GM12878 (cell line): ENCODE measurements at regions of chr5 and their contacts with region 1.

Region 1: GRCh38 chr5:172714491-172715421 is 56.2 kb downstream of the DUSP1 start:
- DNase-seq: no peak
- ATAC-seq: peak; percentile 89
- H3K4me3 ChIP-seq: no peak overlapping the region
- H3K27ac ChIP-seq: no peak overlapping the region
- H3K4me1 ChIP-seq: no peaks in the 10 kb centered on the region
- H3K27me3 ChIP-seq: no peaks in the 10 kb centered on the region; a peak in 1 of 4 replicates
- CTCF ChIP-seq: peak; percentile 66 to 95 (median 88)
- EP300 ChIP-seq: no peak
- POLR2A ChIP-seq: no peak
- RAD21 ChIP-seq: peak; percentile 40

Region 2: DNA sequence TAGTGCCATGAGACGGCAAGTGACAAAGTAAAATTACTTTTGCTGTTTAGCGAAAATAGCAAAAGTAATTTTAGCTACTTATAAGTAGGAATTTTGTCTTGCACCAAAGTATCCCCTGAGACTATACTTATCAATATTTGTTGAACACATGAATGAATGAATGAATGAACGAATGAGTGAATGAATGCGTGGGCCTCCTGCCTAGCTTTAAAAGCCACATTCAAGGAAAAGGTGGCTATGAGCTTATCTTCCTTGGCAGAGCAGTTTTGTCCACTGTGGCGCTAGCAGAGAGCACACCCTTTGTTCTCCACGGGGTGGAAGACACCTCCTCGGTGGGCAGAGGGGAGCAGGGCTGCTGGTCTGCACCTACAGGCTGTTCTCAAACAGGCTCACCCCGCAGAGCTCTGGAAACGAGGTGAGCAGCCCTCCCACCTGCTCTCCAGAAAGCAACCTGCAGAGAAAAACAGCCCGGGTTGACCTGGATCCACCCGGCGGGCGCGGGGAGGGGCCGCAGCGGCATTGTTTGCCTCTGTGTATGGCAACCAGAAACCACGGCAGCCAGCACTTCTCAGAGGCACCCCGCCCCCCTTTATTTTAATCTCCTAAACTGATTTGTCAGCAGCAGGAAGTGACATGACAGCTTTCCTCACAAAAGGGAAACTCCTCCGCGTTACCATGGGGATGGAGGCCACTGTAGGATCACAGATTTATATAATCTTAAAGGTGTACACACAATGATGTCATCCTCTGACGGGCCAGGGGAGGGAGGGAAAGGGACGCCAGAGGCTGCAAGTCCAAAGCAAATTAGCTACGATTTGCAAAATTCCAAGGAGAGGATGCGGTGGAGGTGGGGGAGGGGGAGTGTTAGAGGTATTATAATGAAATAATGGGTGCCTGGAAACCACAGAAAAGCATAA is 50.4 kb after region 1 on chr5:
- CTCF ChIA-PET with region 1: interaction called, 40 read pairs
- POLR2A ChIA-PET with region 1: no interaction called
- RAD21 ChIA-PET with region 1: interaction called, 13 read pairs
- SMC1A ChIA-PET with region 1: interaction called, 3 read pairs
- in situ Hi-C with region 1: no loop called
- intact Hi-C with region 1: loop called (anchors 2 kb)
- DNase-seq: peak; percentile 83
- ATAC-seq: peak; percentile 93
- H3K4me3 ChIP-seq: peak overlapping the region; percentile 69; the same call in 1 of the 2 replicates
- H3K27ac ChIP-seq: peak overlapping the region; percentile 65
- H3K4me1 ChIP-seq: peaks cover 19% of the 10 kb centered on the region
- H3K27me3 ChIP-seq: no peaks in the 10 kb centered on the region
- CTCF ChIP-seq: no peak
- EP300 ChIP-seq: peak in 1 of 2 experiments; percentile 82; a peak in 2 of 4 replicates
- POLR2A ChIP-seq: peak; percentile 37; the same call in 1 of the 2 replicates
- RAD21 ChIP-seq: no peak

Region 3: GRCh38 chr5:172777881-172778814 is 63.4 kb after region 1 on chr5:
- CTCF ChIA-PET with region 1: interaction called, 40 read pairs
- POLR2A ChIA-PET with region 1: interaction called, 4 read pairs
- RAD21 ChIA-PET with region 1: no interaction called
- SMC1A ChIA-PET with region 1: interaction called, 13 read pairs
- in situ Hi-C with region 1: no loop called
- intact Hi-C with region 1: no loop called
- DNase-seq: no peak
- ATAC-seq: peak; percentile 49
- H3K4me3 ChIP-seq: peak overlapping the region; percentile 34
- H3K27ac ChIP-seq: peak overlapping the region; percentile 93
- H3K4me1 ChIP-seq: peaks cover 21% of the 10 kb centered on the region
- H3K27me3 ChIP-seq: no peaks in the 10 kb centered on the region
- CTCF ChIP-seq: no peak
- EP300 ChIP-seq: no peak
- POLR2A ChIP-seq: no peak
- RAD21 ChIP-seq: no peak

Region 4: GRCh38 chr5:172904643-172905347 is 190.0 kb after region 1 on chr5:
- CTCF ChIA-PET with region 1: interaction called, 12 read pairs
- POLR2A ChIA-PET with region 1: no interaction called
- RAD21 ChIA-PET with region 1: interaction called, 3 read pairs
- SMC1A ChIA-PET with region 1: interaction called, 3 read pairs
- in situ Hi-C with region 1: no loop called
- intact Hi-C with region 1: no loop called
- DNase-seq: no peak
- ATAC-seq: no peak
- H3K4me3 ChIP-seq: no peak overlapping the region
- H3K27ac ChIP-seq: no peak overlapping the region
- H3K4me1 ChIP-seq: peaks cover 18% of the 10 kb centered on the region
- H3K27me3 ChIP-seq: no peaks in the 10 kb centered on the region
- CTCF ChIP-seq: no peak
- EP300 ChIP-seq: no peak
- POLR2A ChIP-seq: no peak
- RAD21 ChIP-seq: no peak

Region 5: DNA sequence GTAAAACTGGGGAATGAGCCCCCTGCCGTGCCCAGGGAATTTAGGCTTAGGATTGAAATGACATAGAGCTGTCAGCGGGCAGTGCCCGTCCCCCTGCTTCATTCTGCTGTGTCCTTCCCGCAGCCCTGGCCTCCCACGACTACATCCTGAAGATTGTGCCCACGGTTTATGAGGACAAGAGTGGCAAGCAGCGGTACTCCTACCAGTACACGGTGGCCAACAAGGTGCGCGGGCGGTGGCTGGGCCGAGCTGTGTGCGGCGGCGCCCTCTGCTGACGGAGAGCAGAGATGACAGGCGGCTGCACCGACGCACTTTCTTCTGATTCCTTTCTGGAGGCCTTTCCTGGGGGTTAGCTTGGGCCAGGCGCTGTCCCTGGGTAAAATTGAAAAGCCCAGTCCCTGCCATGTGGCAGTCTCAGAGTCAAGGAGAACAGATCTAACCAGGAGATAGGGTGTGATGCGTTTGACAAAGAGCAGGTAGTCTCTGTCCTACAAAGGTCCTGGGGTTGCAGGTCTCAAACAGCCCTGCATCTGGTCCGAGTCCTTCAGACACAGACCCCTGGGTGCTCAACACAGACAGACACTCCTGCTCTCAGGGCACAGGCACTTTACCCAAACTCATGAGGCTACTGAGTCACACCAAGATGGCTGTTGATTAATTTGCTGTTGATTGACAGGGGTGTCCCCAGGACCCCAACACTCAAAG is 217.7 kb after region 1 on chr5:
- CTCF ChIA-PET with region 1: interaction called, 324 read pairs
- POLR2A ChIA-PET with region 1: interaction called, 4 read pairs
- RAD21 ChIA-PET with region 1: interaction called, 70 read pairs
- SMC1A ChIA-PET with region 1: interaction called, 92 read pairs
- in situ Hi-C with region 1: loop called (anchors 5 kb)
- intact Hi-C with region 1: loop called (anchors 1 kb)
- DNase-seq: no peak
- ATAC-seq: peak; percentile 97
- H3K4me3 ChIP-seq: no peak overlapping the region
- H3K27ac ChIP-seq: no peak overlapping the region
- H3K4me1 ChIP-seq: peaks cover 5% of the 10 kb centered on the region; the same call in 1 of the 2 replicates
- H3K27me3 ChIP-seq: no peaks in the 10 kb centered on the region
- CTCF ChIP-seq: peak; percentile 94 to 96 (median 96)
- EP300 ChIP-seq: no peak
- POLR2A ChIP-seq: no peak
- RAD21 ChIP-seq: peak; percentile 95

Region 6: DNA sequence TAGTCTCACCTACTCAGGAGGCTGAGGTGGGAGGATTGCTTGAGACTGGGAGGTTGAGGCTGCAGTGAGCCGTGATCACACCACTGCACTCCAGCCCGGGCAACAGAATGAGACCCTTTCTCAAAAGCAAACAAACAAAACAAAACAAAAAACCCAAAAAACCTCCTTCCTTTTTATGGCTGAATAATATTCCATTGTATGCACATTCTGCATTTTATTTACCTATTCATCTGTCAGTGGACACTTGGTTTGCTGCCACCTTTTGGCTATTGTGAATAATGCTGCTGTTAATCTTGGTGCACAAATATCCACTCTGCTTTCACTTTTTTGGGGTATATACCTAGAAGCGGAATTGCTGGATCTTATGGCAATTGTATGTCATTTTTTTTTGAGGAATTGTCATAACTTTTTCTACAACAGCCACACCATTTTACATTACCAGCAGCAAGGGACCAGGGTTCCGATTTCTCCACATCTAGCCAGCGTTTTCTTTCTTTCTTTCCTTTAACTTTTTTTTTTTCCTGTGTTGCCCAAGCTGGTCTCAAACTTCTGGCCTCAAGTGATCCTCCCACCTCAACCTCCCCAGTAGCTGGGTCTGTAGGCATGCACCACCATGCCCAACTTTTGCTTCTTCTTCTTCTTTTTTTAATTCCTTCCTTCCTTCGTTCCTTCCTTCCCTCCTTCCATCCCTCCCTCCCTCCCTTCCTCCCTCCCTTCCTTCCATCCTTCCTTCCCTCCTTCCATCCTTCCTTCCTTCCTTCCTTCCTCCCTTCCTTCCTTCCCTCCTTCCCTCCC is 489.6 kb after region 1 on chr5:
- CTCF ChIA-PET with region 1: interaction called, 3 read pairs
- POLR2A ChIA-PET with region 1: no interaction called
- RAD21 ChIA-PET with region 1: no interaction called
- SMC1A ChIA-PET with region 1: no interaction called
- in situ Hi-C with region 1: no loop called
- intact Hi-C with region 1: loop called (anchors 10 kb)
- DNase-seq: no peak
- ATAC-seq: peak; percentile 63
- H3K4me3 ChIP-seq: no peak overlapping the region
- H3K27ac ChIP-seq: no peak overlapping the region
- H3K4me1 ChIP-seq: no peaks in the 10 kb centered on the region
- H3K27me3 ChIP-seq: no peaks in the 10 kb centered on the region
- CTCF ChIP-seq: peak; percentile 42 to 60 (median 52); a peak in 5 of 6 replicates
- EP300 ChIP-seq: no peak
- POLR2A ChIP-seq: no peak
- RAD21 ChIP-seq: peak; percentile 73